GM12878 (cell line): ENCODE measurements at regions of chr10 and their contacts with region 1.

Region 1: DNA sequence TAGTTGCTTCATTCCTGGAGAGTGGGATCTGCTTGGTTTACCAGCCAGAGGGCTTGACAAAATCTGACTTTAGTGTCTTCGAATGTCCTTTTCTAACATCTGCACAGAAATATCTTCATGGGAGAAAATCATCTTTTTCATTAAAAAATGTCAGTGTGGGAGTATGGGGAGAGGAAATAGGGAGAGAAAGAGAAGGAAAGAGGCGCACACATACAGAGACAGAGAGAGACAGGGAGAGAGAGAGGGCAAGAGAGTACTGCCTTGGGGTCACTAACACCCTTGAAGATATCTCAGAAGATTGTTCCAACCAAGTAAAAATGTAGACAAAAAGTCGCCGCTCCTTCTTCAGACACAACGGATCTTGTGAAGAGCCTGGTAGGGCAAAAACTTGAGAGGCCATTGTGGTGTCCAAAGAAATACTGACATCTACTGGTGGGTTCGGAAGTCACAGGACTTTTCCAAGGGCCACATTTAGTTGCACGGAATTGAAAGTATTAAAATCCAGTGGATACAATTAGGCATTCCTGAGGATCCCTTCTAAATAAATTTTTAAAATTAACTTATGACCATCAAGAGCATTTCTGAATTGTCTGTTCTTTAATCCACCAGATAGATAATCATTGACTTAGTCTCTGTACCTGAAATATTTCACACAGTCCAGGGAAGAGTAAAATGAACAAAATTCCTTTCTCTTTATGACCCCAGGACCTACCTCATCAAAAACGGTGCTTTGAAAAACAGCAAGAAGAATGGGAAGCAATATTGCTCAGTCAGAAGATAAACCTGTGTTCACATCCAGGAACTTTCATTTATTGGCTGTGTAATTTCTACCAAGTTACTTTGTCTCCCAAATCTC is 29.7 kb downstream of the VIM start:
- DNase-seq: peak; percentile 16
- ATAC-seq: peak; percentile 85
- H3K4me3 ChIP-seq: no peak overlapping the region
- H3K27ac ChIP-seq: no peak overlapping the region
- H3K4me1 ChIP-seq: no peaks in the 10 kb centered on the region
- H3K27me3 ChIP-seq: no peaks in the 10 kb centered on the region
- CTCF ChIP-seq: peak; percentile 68 to 92 (median 71); a peak in 5 of 6 replicates
- EP300 ChIP-seq: no peak
- POLR2A ChIP-seq: no peak
- RAD21 ChIP-seq: peak; percentile 95

Region 2: GRCh38 chr10:15898046-15898445 is 1359.6 kb before region 1 on chr10:
- CTCF ChIA-PET with region 1: no interaction called
- POLR2A ChIA-PET with region 1: no interaction called
- RAD21 ChIA-PET with region 1: interaction called, 4 read pairs
- SMC1A ChIA-PET with region 1: no interaction called
- in situ Hi-C with region 1: loop called (anchors 25 kb)
- intact Hi-C with region 1: loop called (anchors 10 kb)
- DNase-seq: no peak
- ATAC-seq: peak; percentile 51; the same call in 1 of the 3 replicates
- H3K4me3 ChIP-seq: no peak overlapping the region
- H3K27ac ChIP-seq: no peak overlapping the region
- H3K4me1 ChIP-seq: no peaks in the 10 kb centered on the region
- H3K27me3 ChIP-seq: no peaks in the 10 kb centered on the region
- CTCF ChIP-seq: peak; percentile 12 to 29 (median 26); a peak in 3 of 6 replicates
- EP300 ChIP-seq: no peak
- POLR2A ChIP-seq: no peak
- RAD21 ChIP-seq: no peak

Region 3: DNA sequence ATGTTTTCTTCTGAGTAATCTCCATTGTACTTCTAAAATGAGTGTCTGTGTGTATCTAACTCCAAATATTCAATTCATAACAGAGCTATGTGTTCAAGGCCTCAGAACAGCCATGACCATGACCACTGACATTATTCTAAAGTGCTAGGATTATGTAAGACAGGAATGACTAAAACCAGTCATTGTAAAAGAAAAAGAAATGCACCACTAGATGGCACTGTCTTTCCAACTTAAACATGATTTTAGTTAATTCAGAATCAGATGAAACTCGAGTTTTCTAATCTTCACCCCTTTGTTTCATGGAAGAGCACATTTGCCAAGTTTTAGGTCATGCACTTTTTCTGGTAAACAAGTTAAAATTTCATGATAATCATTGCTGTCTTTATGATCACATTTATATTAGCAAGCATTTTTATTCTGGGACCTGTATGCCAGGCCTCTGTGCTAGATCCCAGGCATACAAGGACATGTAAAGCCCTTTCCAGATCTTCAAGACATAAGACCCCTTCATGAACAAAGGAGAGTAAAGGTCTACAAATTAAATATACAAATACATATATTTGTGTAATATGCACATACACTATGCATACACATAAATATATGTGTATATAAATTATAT is 414.3 kb before region 1 on chr10:
- CTCF ChIA-PET with region 1: interaction called, 18 read pairs
- POLR2A ChIA-PET with region 1: interaction called, 3 read pairs
- RAD21 ChIA-PET with region 1: interaction called, 8 read pairs
- SMC1A ChIA-PET with region 1: interaction called, 7 read pairs
- in situ Hi-C with region 1: loop called (anchors 5 kb)
- intact Hi-C with region 1: loop called (anchors 1 kb)
- DNase-seq: peak; percentile 12
- ATAC-seq: peak; percentile 78
- H3K4me3 ChIP-seq: no peak overlapping the region
- H3K27ac ChIP-seq: no peak overlapping the region
- H3K4me1 ChIP-seq: no peaks in the 10 kb centered on the region
- H3K27me3 ChIP-seq: no peaks in the 10 kb centered on the region; a peak in 1 of 4 replicates
- CTCF ChIP-seq: peak; percentile 6 to 59 (median 58); a peak in 5 of 6 replicates
- EP300 ChIP-seq: no peak
- POLR2A ChIP-seq: no peak
- RAD21 ChIP-seq: peak; percentile 68

Region 4: GRCh38 chr10:16950656-16951601 is 306.8 kb before region 1 on chr10:
- CTCF ChIA-PET with region 1: interaction called, 4 read pairs
- POLR2A ChIA-PET with region 1: no interaction called
- RAD21 ChIA-PET with region 1: no interaction called
- SMC1A ChIA-PET with region 1: no interaction called
- in situ Hi-C with region 1: no loop called
- intact Hi-C with region 1: loop called (anchors 5 kb)
- DNase-seq: no peak
- ATAC-seq: no peak
- H3K4me3 ChIP-seq: no peak overlapping the region
- H3K27ac ChIP-seq: no peak overlapping the region
- H3K4me1 ChIP-seq: no peaks in the 10 kb centered on the region
- H3K27me3 ChIP-seq: no peaks in the 10 kb centered on the region
- CTCF ChIP-seq: no peak
- EP300 ChIP-seq: no peak
- POLR2A ChIP-seq: no peak
- RAD21 ChIP-seq: no peak

Region 5: GRCh38 chr10:17166699-17167098 is 91.0 kb before region 1 on chr10:
- CTCF ChIA-PET with region 1: no interaction called
- POLR2A ChIA-PET with region 1: no interaction called
- RAD21 ChIA-PET with region 1: no interaction called
- SMC1A ChIA-PET with region 1: no interaction called
- in situ Hi-C with region 1: no loop called
- intact Hi-C with region 1: no loop called
- DNase-seq: no peak
- ATAC-seq: no peak
- H3K4me3 ChIP-seq: no peak overlapping the region
- H3K27ac ChIP-seq: no peak overlapping the region
- H3K4me1 ChIP-seq: no peaks in the 10 kb centered on the region
- H3K27me3 ChIP-seq: no peaks in the 10 kb centered on the region
- CTCF ChIP-seq: no peak
- EP300 ChIP-seq: no peak
- POLR2A ChIP-seq: no peak
- RAD21 ChIP-seq: no peak

Region 6: DNA sequence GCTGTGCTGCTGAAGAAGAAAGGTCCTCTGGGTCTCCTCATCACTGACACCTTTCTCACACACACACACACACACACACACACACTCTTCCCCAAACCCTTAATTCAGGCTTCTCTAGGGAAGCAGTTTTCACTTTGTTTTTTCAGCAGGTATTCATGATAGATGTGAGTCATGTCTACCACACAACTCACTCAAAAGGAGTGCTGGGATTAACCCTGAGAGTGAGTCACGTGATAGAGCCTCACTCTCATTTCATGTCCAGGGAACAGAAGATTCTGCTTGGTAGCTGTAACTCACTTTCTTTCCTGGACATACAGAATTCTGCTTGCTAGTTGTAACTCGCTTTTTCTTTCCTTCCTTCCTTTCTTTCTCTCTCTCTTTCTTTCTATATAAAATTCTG is 15.7 kb after region 1 on chr10:
- CTCF ChIA-PET with region 1: interaction called, 14 read pairs
- POLR2A ChIA-PET with region 1: no interaction called
- RAD21 ChIA-PET with region 1: no interaction called
- SMC1A ChIA-PET with region 1: no interaction called
- in situ Hi-C with region 1: no loop called
- intact Hi-C with region 1: no loop called
- DNase-seq: no peak
- ATAC-seq: no peak
- H3K4me3 ChIP-seq: no peak overlapping the region
- H3K27ac ChIP-seq: no peak overlapping the region
- H3K4me1 ChIP-seq: no peaks in the 10 kb centered on the region
- H3K27me3 ChIP-seq: no peaks in the 10 kb centered on the region; a peak in 1 of 4 replicates
- CTCF ChIP-seq: no peak
- EP300 ChIP-seq: no peak
- POLR2A ChIP-seq: no peak
- RAD21 ChIP-seq: no peak